ENCODE measurements at regions of chr2 and their contacts with region 1.

Region 1: GRCh38 chr2:45935791-45936622 is 284.5 kb downstream of the PRKCE start:
- DNase-seq: peak; percentile 96 to 100 (median 99)
- H3K4me3 ChIP-seq: no peak overlapping the region
- H3K27ac ChIP-seq: peak overlapping the region in 4 of 5 donors; percentile 11 to 81 (median 64)
- H3K4me1 ChIP-seq: peaks cover 4 to 16% of the 10 kb centered on the region in 2 donors
- H3K27me3 ChIP-seq: no peaks in the 10 kb centered on the region
- CTCF ChIP-seq: peak; percentile 64 to 96 (median 90)
- POLR2A ChIP-seq: no peak

Region 2: GRCh38 chr2:45643543-45644542 is 292.2 kb before region 1 on chr2:
- intact Hi-C with region 1: loop called (anchors 2 to 5 kb)
- DNase-seq: peak; percentile 48 to 77 (median 67)
- H3K4me3 ChIP-seq: peak overlapping the region; percentile 51 to 71 (median 60)
- H3K27ac ChIP-seq: peak overlapping the region in 1 of 5 donors; percentile 43
- H3K4me1 ChIP-seq: peaks cover 0 to 13% of the 10 kb centered on the region in 2 donors
- H3K27me3 ChIP-seq: no peaks in the 10 kb centered on the region
- CTCF ChIP-seq: peak; percentile 77 to 99 (median 94)
- POLR2A ChIP-seq: no peak

Region 3: DNA sequence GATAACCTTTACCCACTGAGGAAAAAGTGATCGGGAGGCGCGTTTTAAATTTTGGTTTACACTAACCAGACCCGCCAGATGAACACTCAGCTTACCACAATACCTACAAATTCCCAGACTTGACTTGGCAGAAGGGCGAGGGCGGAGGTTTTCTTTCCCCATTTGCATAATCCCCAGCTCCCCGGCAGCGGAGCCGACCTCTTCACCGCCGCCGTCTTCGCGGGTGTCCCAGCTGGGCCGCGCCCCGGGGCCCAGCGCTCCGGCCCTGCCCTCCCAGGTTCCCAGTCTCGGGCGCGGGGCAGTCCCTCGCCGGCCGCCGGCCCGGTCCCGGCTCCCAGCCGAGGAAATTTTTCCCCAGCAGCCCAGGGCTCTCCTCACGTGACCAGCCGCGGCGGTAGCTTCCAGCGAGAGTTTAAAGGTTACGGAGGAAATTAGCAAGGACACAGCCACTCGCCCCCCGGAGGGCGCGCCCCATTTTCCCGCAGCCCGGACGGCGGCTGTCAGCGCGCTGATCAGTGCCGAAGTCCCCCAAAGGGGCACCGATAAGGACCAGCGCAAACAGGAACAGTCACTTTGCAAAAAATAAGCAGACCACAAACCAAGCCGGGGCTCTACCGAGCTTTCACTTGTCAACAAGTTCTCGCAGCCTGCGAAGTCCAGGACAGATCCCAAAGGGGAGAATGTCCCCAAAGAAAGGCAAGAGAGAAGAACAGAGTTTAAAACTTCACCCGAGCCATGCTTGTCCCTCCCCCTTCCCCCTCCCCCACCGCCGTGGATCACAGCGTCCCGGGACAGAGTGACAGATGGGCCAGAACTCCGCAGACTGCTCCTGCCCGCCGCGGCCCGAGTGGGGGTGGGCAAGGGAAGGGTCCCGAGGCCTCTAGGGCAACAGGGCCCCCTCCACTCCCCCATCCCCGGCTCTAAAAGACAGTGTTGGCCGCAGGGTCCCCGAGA is 285.9 kb before region 1 on chr2:
- intact Hi-C with region 1: loop called in 1 of 2 experiments (anchors 5 kb)
- DNase-seq: peak; percentile 71 to 87 (median 82)
- H3K4me3 ChIP-seq: peak overlapping the region; percentile 63 to 96 (median 74)
- H3K27ac ChIP-seq: peak overlapping the region; percentile 96 to 100 (median 99)
- H3K4me1 ChIP-seq: peaks cover 6 to 27% of the 10 kb centered on the region in 2 donors
- H3K27me3 ChIP-seq: no peaks in the 10 kb centered on the region
- CTCF ChIP-seq: no peak
- POLR2A ChIP-seq: peak in 1 of 2 donors; percentile 65

Region 4: DNA sequence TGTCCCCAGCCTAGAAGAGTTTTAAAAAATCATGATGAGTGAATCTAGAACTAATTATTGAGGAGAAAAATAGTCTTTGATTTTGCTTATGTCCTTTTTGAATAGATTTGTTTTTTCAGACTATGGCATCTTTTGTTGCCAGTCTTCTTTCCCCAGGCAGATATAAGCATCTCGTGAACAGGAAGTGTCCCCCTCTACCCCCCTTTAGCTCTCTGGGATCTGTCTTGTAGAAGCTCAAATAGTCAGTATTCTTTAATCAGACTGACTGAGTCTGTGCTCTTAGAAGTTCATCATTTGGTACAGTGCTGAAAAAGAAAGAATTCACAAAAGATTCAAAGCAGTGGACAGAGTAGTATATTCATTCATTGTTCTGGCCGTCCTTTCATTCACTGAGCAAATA is 274.2 kb before region 1 on chr2:
- intact Hi-C with region 1: no loop called
- DNase-seq: no peak
- H3K4me3 ChIP-seq: no peak overlapping the region
- H3K27ac ChIP-seq: no peak overlapping the region
- H3K4me1 ChIP-seq: no peaks in the 10 kb centered on the region
- H3K27me3 ChIP-seq: no peaks in the 10 kb centered on the region
- CTCF ChIP-seq: no peak
- POLR2A ChIP-seq: no peak

Region 5: DNA sequence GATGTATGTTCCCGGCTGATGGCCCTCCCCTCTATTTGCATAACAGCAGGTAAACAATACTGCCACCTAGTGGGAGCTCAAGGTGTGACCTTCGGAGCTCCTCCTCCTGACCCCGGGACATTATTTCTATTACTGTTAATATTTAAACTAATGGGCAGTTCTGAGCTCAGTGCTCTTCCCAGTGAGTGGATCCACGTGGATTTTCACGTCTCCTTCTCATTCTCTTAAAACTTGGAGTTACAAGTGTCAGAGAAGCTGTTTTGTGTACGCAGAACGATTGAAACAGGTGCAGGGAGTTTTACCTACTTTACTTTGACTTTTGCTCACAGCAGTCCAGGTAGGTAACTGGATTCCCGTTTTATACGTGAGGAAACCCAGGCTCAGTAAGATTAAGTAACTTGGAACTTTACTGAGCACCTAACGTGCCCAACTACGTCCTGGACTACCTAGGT is 157.3 kb before region 1 on chr2:
- intact Hi-C with region 1: loop called in 1 of 2 experiments (anchors 10 kb)
- DNase-seq: peak; percentile 68 to 88 (median 79)
- H3K4me3 ChIP-seq: no peak overlapping the region
- H3K27ac ChIP-seq: no peak overlapping the region
- H3K4me1 ChIP-seq: no peaks in the 10 kb centered on the region
- H3K27me3 ChIP-seq: no peaks in the 10 kb centered on the region
- CTCF ChIP-seq: peak; percentile 66 to 84 (median 79)
- POLR2A ChIP-seq: no peak

Region 6: DNA sequence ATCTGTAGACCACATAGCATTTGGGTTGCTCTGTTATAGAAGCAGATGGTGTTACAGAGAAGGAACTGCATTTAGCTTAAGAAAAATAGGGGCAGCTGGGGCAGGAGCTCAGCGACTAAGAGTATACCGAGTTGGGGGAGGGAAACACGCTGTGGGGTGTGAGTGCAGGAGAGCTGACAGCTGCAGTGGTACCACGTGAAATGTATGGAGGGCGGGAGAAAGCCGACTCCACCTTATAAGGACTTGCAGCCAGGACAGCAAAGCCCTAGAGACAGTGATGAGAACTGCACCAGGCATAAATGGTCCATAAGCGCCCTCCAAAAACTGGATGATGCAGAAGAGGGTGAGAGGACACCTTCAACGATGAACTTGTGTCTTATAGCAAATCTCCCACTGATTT is 47.0 kb before region 1 on chr2:
- intact Hi-C with region 1: no loop called
- DNase-seq: peak in 4 of 7 donors; percentile 32 to 72 (median 36)
- H3K4me3 ChIP-seq: no peak overlapping the region
- H3K27ac ChIP-seq: peak overlapping the region in 3 of 5 donors; percentile 20 to 54 (median 35)
- H3K4me1 ChIP-seq: peaks cover 10 to 69% of the 10 kb centered on the region in 2 donors
- H3K27me3 ChIP-seq: no peaks in the 10 kb centered on the region
- CTCF ChIP-seq: peak in 3 of 6 experiments; percentile 14 to 28 (median 19)
- POLR2A ChIP-seq: no peak